Activated CD4-positive, alpha-beta memory T cell treated with anti-CD3 and anti-CD28 coated beads for 36 hours (primary cell): ENCODE measurements at regions of chr1 and their contacts with region 1.

Region 1: GRCh38 chr1:53728702-53729455 is 10.1 kb downstream of the GLIS1 start:
- DNase-seq: no peak
- H3K4me3 Mint-ChIP-seq: no peak overlapping the region
- H3K27ac Mint-ChIP-seq: no peak overlapping the region
- H3K4me1 Mint-ChIP-seq: no peaks in the 10 kb centered on the region
- H3K27me3 Mint-ChIP-seq: peaks cover 6% of the 10 kb centered on the region

Region 2: DNA sequence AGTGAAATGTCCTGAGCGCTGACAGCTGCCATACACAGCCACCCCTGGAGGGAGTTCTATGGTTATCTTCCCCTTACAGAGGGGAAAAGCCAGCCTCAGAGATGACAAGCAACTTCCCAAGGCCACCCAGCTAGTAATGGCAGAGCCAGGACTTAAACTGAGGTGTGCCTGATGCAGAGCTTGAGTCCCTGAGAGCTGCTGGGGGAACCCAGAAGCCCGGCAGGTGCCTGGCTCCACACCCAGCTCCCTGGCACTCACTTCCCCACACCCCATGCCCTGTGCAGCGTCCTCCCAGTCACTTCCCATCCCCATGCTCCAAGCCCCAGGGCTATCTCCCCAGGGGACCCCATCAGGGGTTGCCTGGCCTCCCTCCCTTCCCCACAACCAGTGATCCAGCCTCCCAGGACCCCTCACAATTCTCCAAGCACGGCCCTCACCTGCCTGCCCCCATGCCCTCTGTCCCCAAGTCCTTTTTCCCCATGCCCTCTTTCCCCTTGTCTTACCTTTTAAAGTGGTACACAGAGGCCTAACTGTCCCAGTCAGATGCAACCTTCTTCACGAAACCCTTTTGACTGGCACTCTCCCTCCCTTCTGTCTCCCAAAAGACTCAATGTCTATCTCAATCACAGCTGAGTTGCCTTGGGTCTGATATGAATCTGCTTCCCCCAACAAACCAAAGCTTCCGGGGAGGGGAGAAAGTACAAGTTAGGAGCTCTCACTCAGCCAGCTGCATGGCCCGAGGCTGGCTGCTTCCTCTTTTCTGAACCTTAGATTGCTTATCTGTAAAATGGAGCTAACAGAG is 361.2 kb before region 1 on chr1:
- CTCF ChIA-PET with region 1: no interaction called
- POLR2A ChIA-PET with region 1: no interaction called
- intact Hi-C with region 1: no loop called
- DNase-seq: peak; percentile 63
- H3K4me3 Mint-ChIP-seq: peak overlapping the region; percentile 61
- H3K27ac Mint-ChIP-seq: peak overlapping the region; percentile 77
- H3K4me1 Mint-ChIP-seq: peaks cover 18% of the 10 kb centered on the region
- H3K27me3 Mint-ChIP-seq: no peaks in the 10 kb centered on the region

Region 3: DNA sequence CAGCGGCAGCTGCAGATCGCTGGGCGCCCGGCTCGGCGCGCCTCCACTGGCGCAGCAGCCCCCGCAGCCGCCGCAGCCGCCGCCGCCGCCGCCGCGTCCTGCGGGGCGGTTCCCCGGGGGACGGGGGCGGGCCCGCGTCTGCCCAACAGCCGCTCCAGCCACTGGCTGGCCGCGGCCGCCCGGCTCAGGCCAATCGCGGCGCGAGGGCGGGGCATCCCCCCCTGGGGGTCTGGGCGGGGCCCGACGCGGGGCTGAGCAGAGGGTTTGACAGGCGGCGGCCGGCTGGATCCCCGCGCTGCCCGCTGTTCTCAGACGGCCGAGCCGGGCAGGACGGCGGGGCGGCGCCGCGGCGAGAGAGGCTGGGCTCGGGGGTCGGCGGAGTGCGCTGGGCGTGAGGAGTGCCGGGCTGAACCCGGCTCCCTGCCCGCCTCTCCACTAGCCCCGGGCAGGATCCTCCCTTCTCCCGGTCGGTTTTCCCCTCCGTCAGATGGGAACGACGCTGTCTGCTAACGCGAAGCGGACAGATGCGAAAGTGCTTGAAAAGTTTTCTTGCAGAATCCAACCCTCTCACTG is 10.3 kb after region 1 on chr1 and contains the start of gene GLIS1:
- CTCF ChIA-PET with region 1: no interaction called
- POLR2A ChIA-PET with region 1: no interaction called
- intact Hi-C with region 1: loop called (anchors 1 kb)
- DNase-seq: peak; percentile 67
- H3K4me3 Mint-ChIP-seq: peak within 1 kb of the TSS; percentile 42
- H3K27ac Mint-ChIP-seq: no peak within 1 kb of the TSS
- H3K4me1 Mint-ChIP-seq: peaks cover 2% of the 10 kb centered on the region
- H3K27me3 Mint-ChIP-seq: peaks cover 45% of the 10 kb centered on the region
- total RNA-seq, gene GLIS1: not detected

Region 4: GRCh38 chr1:53781654-53782053 is 52.8 kb after region 1 on chr1:
- CTCF ChIA-PET with region 1: no interaction called
- POLR2A ChIA-PET with region 1: no interaction called
- intact Hi-C with region 1: no loop called
- DNase-seq: no peak
- H3K4me3 Mint-ChIP-seq: no peak overlapping the region
- H3K27ac Mint-ChIP-seq: no peak overlapping the region
- H3K4me1 Mint-ChIP-seq: peaks cover 14% of the 10 kb centered on the region
- H3K27me3 Mint-ChIP-seq: no peaks in the 10 kb centered on the region